ENCODE measurements at regions of chr6 and their contacts with region 1.

Region 1: GRCh38 chr6:73610444-73611275 is 43.1 kb downstream of the SLC17A5 start:
- DNase-seq: no peak
- H3K4me3 ChIP-seq: no peak overlapping the region
- CTCF ChIP-seq: peak; percentile 27

Region 2: DNA sequence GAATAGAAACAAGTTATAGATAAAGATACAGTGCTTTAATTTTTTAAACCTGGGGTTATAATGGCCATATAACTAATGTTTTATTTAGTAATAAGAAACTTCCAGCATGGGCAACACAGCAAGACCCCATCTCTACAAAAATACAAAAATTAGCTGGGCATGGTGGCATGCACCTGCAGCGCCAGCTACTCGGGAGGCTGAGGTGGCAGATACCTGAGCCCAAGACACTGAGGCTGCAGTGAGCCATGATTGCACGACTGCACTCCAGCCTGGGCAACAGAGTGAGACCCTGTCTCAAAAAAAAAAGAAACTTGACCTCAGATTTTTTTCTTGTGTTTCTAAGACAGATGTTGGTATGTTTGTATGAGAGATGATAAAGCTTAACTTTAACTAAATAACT is 112.7 kb before region 1 on chr6:
- CTCF ChIA-PET with region 1: interaction called, 26 read pairs
- POLR2A ChIA-PET with region 1: no interaction called
- DNase-seq: no peak
- H3K4me3 ChIP-seq: no peak overlapping the region
- CTCF ChIP-seq: no peak

Region 3: GRCh38 chr6:73503027-73503772 is 107.5 kb before region 1 on chr6:
- CTCF ChIA-PET with region 1: interaction called, 26 read pairs
- POLR2A ChIA-PET with region 1: no interaction called
- DNase-seq: no peak
- H3K4me3 ChIP-seq: no peak overlapping the region
- CTCF ChIP-seq: no peak

Region 4: GRCh38 chr6:73515204-73515655 is 95.4 kb before region 1 on chr6:
- CTCF ChIA-PET with region 1: interaction called, 57 read pairs
- POLR2A ChIA-PET with region 1: interaction called, 37 read pairs
- DNase-seq: no peak
- H3K4me3 ChIP-seq: no peak overlapping the region
- CTCF ChIP-seq: no peak

Region 5: DNA sequence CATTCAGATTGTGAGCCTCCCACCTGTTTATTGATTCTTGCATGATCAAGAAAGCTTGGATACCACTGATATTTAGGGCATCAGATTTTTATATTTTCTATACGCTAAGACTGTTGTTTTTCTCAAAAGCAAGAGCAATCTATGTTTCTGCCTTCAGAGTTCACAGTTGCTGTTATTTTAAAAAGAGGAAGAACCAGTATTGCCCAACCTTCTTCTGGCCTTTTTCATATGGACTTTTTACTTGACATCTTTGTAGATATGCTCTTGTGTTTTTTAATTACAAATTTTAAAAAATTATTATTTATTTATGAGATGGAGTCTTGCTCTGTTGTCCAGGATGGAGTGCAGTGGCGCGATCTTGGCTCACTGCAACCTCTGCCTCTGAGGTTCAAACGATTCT is 14.2 kb after region 1 on chr6:
- CTCF ChIA-PET with region 1: interaction called, 24 read pairs
- POLR2A ChIA-PET with region 1: interaction called, 3 read pairs
- DNase-seq: no peak
- H3K4me3 ChIP-seq: no peak overlapping the region
- CTCF ChIP-seq: no peak

Region 6: GRCh38 chr6:73631849-73632248 is 21.2 kb after region 1 on chr6:
- CTCF ChIA-PET with region 1: interaction called, 13 read pairs
- POLR2A ChIA-PET with region 1: no interaction called
- DNase-seq: no peak
- H3K4me3 ChIP-seq: no peak overlapping the region
- CTCF ChIP-seq: no peak

Region 7: DNA sequence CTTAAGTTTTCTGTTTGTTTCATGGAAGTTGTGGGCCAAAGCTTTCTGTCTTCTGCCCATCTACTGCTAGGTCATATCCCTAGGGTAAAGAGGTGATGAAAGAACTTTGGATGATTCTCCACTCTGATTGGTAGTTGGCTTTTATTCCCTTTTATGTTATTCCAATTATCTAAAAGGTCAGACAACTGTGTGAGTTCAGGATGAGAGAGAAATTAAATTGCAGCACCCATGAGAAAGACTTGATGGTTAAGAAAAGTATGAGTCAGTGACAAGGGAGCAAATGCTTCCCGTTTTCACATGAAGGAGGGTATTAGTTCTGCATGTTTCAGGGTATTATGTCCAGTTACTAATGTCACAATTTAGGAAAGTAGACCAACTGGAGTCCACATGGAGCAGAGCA is 221.7 kb after region 1 on chr6:
- CTCF ChIA-PET with region 1: no interaction called
- POLR2A ChIA-PET with region 1: no interaction called
- DNase-seq: no peak
- H3K4me3 ChIP-seq: no peak overlapping the region
- CTCF ChIP-seq: no peak